ENCODE measurements at regions of chr10 and their contacts with region 1.

Region 1: GRCh38 chr10:91251430-91252056 is 31.1 kb downstream of the PCGF5 start:
- DNase-seq: peak; percentile 26
- H3K4me3 ChIP-seq: no peak overlapping the region
- H3K27ac ChIP-seq: no peak overlapping the region
- H3K4me1 ChIP-seq: peaks cover 3 to 9% of the 10 kb centered on the region in 2 experiments; a peak in 2 of 4 replicates
- H3K27me3 ChIP-seq: no peaks in the 10 kb centered on the region
- CTCF ChIP-seq: peak; percentile 98
- EP300 ChIP-seq: no peak
- RAD21 ChIP-seq: peak; percentile 98

Region 2: DNA sequence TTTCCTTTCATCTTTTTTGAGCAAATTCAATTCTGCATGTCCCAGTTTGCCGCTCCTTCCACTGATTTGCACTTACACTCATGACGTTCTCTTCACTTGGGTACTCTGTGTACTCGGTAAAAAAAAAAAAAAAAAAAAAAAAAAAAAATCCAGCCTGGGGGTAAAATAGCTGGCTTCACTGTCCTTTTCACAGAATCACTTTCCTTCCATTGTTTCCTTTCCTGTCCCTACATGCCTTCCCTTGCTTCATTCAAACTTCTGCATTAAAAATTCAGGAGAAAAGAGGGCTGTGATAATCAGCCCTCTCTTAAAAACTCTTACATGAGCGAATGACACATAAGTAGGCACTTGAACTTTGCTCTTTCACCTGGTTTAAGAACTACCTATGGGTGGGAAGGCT is 339.4 kb before region 1 on chr10:
- CTCF ChIA-PET with region 1: interaction called, 124 read pairs
- POLR2A ChIA-PET with region 1: no interaction called
- DNase-seq: no peak
- H3K4me3 ChIP-seq: no peak overlapping the region
- H3K27ac ChIP-seq: peak overlapping the region; percentile 30 to 67; a peak in 2 of 4 replicates
- H3K4me1 ChIP-seq: peaks cover 4 to 7% of the 10 kb centered on the region in 2 experiments; a peak in 2 of 4 replicates
- H3K27me3 ChIP-seq: no peaks in the 10 kb centered on the region
- CTCF ChIP-seq: no peak
- EP300 ChIP-seq: no peak
- RAD21 ChIP-seq: no peak

Region 3: DNA sequence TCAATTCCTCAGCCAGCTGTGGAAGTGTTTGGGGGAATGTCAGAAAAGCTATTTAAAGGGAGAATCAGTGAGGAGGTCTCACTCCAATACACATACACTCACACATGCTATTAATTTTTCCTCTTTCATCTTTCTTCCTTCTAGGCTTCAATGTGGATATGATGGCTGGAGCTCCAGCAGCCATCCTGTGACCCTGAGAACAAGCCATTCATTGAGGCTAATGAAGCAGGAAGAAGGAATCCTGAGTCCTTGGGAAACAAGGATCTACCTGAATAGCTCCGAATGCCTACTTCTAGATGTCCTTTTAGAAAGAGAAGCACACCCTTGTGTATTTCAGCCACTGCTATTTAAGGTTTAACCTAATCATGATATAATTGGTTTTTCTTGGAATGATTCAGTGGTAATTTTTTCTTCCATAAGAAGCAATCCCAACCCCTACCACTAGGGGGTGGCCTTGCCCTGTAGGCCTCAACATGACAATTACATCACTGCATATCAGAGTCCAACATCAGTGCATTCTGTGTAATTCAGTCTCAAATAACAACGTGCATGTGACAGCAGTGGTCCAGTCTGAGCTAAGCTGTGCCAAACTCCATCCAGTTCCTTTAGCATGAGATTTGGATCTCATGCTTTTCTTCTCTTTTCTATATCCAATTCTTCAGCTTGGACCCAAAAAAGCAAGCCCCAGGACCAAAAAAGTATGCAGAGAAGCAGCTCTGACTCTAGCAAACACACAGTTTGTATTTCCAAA is 245.4 kb before region 1 on chr10:
- CTCF ChIA-PET with region 1: interaction called, 62 read pairs
- POLR2A ChIA-PET with region 1: no interaction called
- DNase-seq: peak; percentile 28
- H3K4me3 ChIP-seq: no peak overlapping the region; a peak in 1 of 4 replicates
- H3K27ac ChIP-seq: peak overlapping the region; percentile 19 to 55; a peak in 2 of 4 replicates
- H3K4me1 ChIP-seq: no peaks in the 10 kb centered on the region; a peak in 2 of 4 replicates
- H3K27me3 ChIP-seq: no peaks in the 10 kb centered on the region
- CTCF ChIP-seq: peak; percentile 95
- EP300 ChIP-seq: no peak
- RAD21 ChIP-seq: peak; percentile 88

Region 4: GRCh38 chr10:91043173-91043910 is 208.2 kb before region 1 on chr10:
- CTCF ChIA-PET with region 1: interaction called, 76 read pairs
- POLR2A ChIA-PET with region 1: no interaction called
- DNase-seq: peak; percentile 52
- H3K4me3 ChIP-seq: no peak overlapping the region; a peak in 1 of 4 replicates
- H3K27ac ChIP-seq: no peak overlapping the region
- H3K4me1 ChIP-seq: no peaks in the 10 kb centered on the region
- H3K27me3 ChIP-seq: no peaks in the 10 kb centered on the region
- CTCF ChIP-seq: peak; percentile 62
- EP300 ChIP-seq: no peak
- RAD21 ChIP-seq: peak; percentile 88

Region 5: GRCh38 chr10:91077549-91078071 is 173.9 kb before region 1 on chr10:
- CTCF ChIA-PET with region 1: interaction called, 16 read pairs
- POLR2A ChIA-PET with region 1: no interaction called
- DNase-seq: peak; percentile 68
- H3K4me3 ChIP-seq: peak overlapping the region in 1 of 2 experiments; percentile 12; a peak in 1 of 4 replicates
- H3K27ac ChIP-seq: peak overlapping the region; percentile 11 to 62; a peak in 1 of 4 replicates
- H3K4me1 ChIP-seq: peaks cover 0 to 15% of the 10 kb centered on the region in 2 experiments; a peak in 2 of 4 replicates
- H3K27me3 ChIP-seq: no peaks in the 10 kb centered on the region
- CTCF ChIP-seq: no peak
- EP300 ChIP-seq: peak in 1 of 2 experiments; percentile 89; a peak in 2 of 4 replicates
- RAD21 ChIP-seq: peak; percentile 45

Region 6: DNA sequence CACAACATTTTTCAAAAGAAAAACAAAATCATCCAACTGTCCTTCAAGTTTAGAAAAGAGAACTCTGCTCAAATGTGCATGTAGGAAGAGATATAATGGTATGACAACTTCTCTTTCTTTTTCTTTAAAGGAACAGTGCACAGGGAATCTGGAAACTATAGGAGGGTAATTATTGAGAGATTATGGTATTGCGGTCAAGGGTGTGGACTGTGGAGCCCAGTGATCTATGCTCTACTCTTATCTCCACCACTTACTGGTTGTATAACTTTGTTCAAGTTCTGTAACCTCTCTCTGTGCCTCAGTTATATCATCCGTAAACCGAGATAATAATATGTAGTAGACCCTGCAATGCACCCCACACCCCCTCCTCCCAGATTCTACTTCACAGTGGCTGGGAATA is 100.9 kb before region 1 on chr10:
- CTCF ChIA-PET with region 1: no interaction called
- POLR2A ChIA-PET with region 1: no interaction called
- DNase-seq: no peak
- H3K4me3 ChIP-seq: no peak overlapping the region
- H3K27ac ChIP-seq: no peak overlapping the region
- H3K4me1 ChIP-seq: no peaks in the 10 kb centered on the region
- H3K27me3 ChIP-seq: no peaks in the 10 kb centered on the region
- CTCF ChIP-seq: no peak
- EP300 ChIP-seq: no peak
- RAD21 ChIP-seq: no peak